Activated B cell treated with CpG ODN at 0.5 μM for 24 hours (primary cell): ENCODE measurements at regions of chr7 and their contacts with region 1.

Region 1: GRCh38 chr7:140209866-140210609 is 33.3 kb upstream of the KDM7A start:
- DNase-seq: peak; percentile 61
- ATAC-seq: peak; percentile 89
- H3K4me3 Mint-ChIP-seq: peak overlapping the region; percentile 73
- H3K27ac Mint-ChIP-seq: peak overlapping the region; percentile 97
- H3K4me1 Mint-ChIP-seq: peaks cover 86% of the 10 kb centered on the region
- H3K27me3 Mint-ChIP-seq: no peaks in the 10 kb centered on the region
- CTCF ChIP-seq: no peak

Region 2: GRCh38 chr7:139915864-139916716 is 293.9 kb before region 1 on chr7:
- CTCF ChIA-PET with region 1: no interaction called
- POLR2A ChIA-PET with region 1: no interaction called
- intact Hi-C with region 1: loop called (anchors 10 kb)
- DNase-seq: peak; percentile 31
- ATAC-seq: peak; percentile 87
- H3K4me3 Mint-ChIP-seq: peak overlapping the region; percentile 58
- H3K27ac Mint-ChIP-seq: peak overlapping the region; percentile 81
- H3K4me1 Mint-ChIP-seq: peaks cover 26% of the 10 kb centered on the region
- H3K27me3 Mint-ChIP-seq: no peaks in the 10 kb centered on the region
- CTCF ChIP-seq: no peak

Region 3: GRCh38 chr7:140196361-140197217 is 13.4 kb before region 1 on chr7:
- CTCF ChIA-PET with region 1: no interaction called
- POLR2A ChIA-PET with region 1: interaction called, 4 read pairs
- intact Hi-C with region 1: loop called (anchors 2 kb)
- DNase-seq: no peak
- ATAC-seq: no peak
- H3K4me3 Mint-ChIP-seq: no peak overlapping the region
- H3K27ac Mint-ChIP-seq: peak overlapping the region; percentile 32
- H3K4me1 Mint-ChIP-seq: peaks cover 5% of the 10 kb centered on the region
- H3K27me3 Mint-ChIP-seq: no peaks in the 10 kb centered on the region
- CTCF ChIP-seq: no peak

Region 4: GRCh38 chr7:140222814-140223213 is 12.8 kb after region 1 on chr7:
- CTCF ChIA-PET with region 1: no interaction called
- POLR2A ChIA-PET with region 1: interaction called, 168 read pairs
- intact Hi-C with region 1: loop called (anchors 1 kb)
- DNase-seq: no peak
- ATAC-seq: peak; percentile 89
- H3K4me3 Mint-ChIP-seq: peak overlapping the region; percentile 33
- H3K27ac Mint-ChIP-seq: peak overlapping the region; percentile 11
- H3K4me1 Mint-ChIP-seq: peaks cover 53% of the 10 kb centered on the region
- H3K27me3 Mint-ChIP-seq: no peaks in the 10 kb centered on the region
- CTCF ChIP-seq: no peak

Region 5: GRCh38 chr7:140249036-140249806 is 39.2 kb after region 1 on chr7:
- CTCF ChIA-PET with region 1: no interaction called
- POLR2A ChIA-PET with region 1: interaction called, 13 read pairs
- intact Hi-C with region 1: no loop called
- DNase-seq: no peak
- ATAC-seq: no peak
- H3K4me3 Mint-ChIP-seq: no peak overlapping the region
- H3K27ac Mint-ChIP-seq: no peak overlapping the region
- H3K4me1 Mint-ChIP-seq: peaks cover 11% of the 10 kb centered on the region
- H3K27me3 Mint-ChIP-seq: no peaks in the 10 kb centered on the region
- CTCF ChIP-seq: no peak